Activated T-helper 1 cell treated with anti-CD3 and anti-CD28 coated beads, Interleukin-12 subunit alpha, Interleukin-12 subunit beta, Interleukin-2, Interleukin-4 antibody, amounts not matched to agents 30 ng/mL and 10 ng/mL and 1 ng/mL, durations not matched to agents 14 hours and 24 hours and 36 hours (primary cell): ENCODE measurements at regions of chr3 and their contacts with region 1.

Region 1: DNA sequence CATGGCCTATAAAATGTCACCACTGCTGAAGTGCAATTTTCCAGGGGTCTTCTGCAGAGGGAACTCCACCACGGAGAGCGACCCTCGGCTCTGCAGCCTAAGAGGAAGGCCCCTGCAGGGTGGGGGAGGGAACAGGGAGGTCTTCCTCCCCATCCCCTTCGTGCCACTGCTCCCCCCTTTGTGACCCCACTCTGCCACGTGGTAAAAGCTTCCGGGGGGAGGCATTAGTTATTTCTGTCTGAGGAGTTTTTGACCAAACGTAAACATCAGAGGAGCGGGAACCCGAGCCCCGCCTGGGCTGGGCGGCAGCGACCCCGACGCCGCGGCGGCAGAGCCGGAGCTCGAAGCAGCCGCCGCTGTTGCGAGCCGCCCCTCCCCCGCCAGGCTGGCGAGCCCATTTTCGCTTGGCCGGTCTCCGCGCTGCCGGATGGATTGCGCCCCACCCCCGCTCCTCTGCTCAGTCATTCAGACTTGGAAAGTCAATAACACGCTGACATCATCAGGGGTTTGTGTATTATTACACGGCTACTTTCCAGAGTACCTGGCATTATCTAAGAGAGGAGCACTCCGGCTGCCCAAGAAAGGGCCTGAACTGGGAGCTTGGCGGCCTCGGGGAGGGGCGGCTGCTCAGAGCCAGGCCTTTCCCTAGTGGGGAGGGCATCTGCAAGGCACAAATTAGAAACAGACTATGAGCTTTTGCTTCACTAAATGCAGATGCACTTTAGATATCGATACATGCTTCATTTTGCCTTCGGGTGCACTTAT is 162.5 kb upstream of the TBL1XR1 start:
- DNase-seq: peak; percentile 93
- H3K4me3 Mint-ChIP-seq: peak overlapping the region; percentile 80
- H3K27ac Mint-ChIP-seq: peak overlapping the region; percentile 97
- H3K4me1 Mint-ChIP-seq: peaks cover 48% of the 10 kb centered on the region
- H3K27me3 Mint-ChIP-seq: no peaks in the 10 kb centered on the region

Region 2: DNA sequence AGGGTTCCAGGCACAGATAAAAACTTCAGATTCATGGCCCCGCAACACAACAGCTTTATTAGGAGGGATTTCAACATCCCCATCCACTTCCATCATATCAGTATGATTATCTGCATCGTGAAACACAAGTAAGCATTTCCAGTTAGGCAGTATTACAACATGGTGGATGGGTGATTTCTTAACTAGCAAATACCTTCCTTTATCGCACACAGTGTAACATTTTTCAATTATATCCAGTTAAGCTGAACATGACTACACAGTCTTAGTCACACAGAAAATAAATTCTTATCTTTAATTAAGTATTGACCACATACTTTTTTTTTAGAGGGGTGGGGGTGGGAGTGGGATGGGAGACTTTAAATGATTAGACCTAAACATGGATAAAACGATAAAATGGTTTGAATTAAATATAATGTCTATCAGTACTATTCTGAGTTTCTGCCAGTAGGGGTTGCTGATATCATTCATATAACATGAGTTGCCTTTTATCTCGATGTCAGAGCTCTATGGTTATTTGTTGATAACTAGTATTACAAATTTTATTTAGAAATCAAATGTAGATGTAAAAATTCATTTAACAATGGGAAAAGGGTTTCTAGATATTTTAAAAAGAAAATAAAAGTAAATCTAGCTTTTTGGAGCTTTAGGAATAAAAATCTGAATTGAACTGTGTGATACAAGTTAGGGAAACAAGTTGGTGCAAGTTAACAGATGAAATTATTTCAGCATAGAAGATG is 309.1 kb before region 1 on chr3:
- intact Hi-C with region 1: loop called (anchors 2 kb)
- DNase-seq: no peak
- H3K4me3 Mint-ChIP-seq: no peak overlapping the region
- H3K27ac Mint-ChIP-seq: no peak overlapping the region
- H3K4me1 Mint-ChIP-seq: peaks cover 11% of the 10 kb centered on the region
- H3K27me3 Mint-ChIP-seq: no peaks in the 10 kb centered on the region

Region 3: DNA sequence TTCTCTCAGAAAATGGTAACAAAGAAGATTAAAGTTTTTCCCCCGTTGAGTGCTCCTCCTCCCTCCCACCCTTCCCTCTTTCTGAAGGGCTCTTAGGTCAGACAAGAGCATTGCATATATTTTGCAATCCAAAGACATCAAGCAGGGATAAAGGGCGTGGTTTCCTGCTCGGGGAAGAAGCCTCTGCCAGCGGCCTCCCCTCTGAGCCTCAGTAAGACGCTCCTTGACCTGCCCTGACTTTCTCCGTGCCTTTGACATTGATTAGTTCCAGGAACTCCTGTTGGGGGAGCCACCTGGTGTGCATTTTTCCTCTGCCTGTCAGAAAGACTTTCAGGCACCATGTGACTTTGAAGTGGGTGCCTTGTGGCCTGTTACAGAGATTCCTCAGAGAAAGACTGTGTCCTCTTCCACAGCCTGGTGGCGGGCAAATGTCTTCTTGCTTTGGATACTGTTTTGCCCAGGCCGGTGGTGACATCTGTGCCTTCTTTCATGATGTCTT is 75.3 kb before region 1 on chr3:
- intact Hi-C with region 1: loop called (anchors 2 kb)
- DNase-seq: peak; percentile 1
- H3K4me3 Mint-ChIP-seq: peak overlapping the region; percentile 49
- H3K27ac Mint-ChIP-seq: no peak overlapping the region
- H3K4me1 Mint-ChIP-seq: peaks cover 34% of the 10 kb centered on the region
- H3K27me3 Mint-ChIP-seq: no peaks in the 10 kb centered on the region

Region 4: GRCh38 chr3:177345049-177345972 is 14.5 kb before region 1 on chr3:
- intact Hi-C with region 1: loop called (anchors 1 kb)
- DNase-seq: peak; percentile 68
- H3K4me3 Mint-ChIP-seq: peak overlapping the region; percentile 17
- H3K27ac Mint-ChIP-seq: peak overlapping the region; percentile 95
- H3K4me1 Mint-ChIP-seq: peaks cover 46% of the 10 kb centered on the region
- H3K27me3 Mint-ChIP-seq: no peaks in the 10 kb centered on the region

Region 5: GRCh38 chr3:177589911-177590381 is 230.2 kb after region 1 on chr3:
- intact Hi-C with region 1: loop called (anchors 2 kb)
- DNase-seq: no peak
- H3K4me3 Mint-ChIP-seq: no peak overlapping the region
- H3K27ac Mint-ChIP-seq: no peak overlapping the region
- H3K4me1 Mint-ChIP-seq: peaks cover 34% of the 10 kb centered on the region
- H3K27me3 Mint-ChIP-seq: no peaks in the 10 kb centered on the region

Region 6: GRCh38 chr3:177705976-177706823 is 346.4 kb after region 1 on chr3:
- intact Hi-C with region 1: no loop called
- DNase-seq: no peak
- H3K4me3 Mint-ChIP-seq: no peak overlapping the region
- H3K27ac Mint-ChIP-seq: no peak overlapping the region
- H3K4me1 Mint-ChIP-seq: no peaks in the 10 kb centered on the region
- H3K27me3 Mint-ChIP-seq: no peaks in the 10 kb centered on the region

Region 7: GRCh38 chr3:177994976-177995375 is 635.2 kb after region 1 on chr3:
- intact Hi-C with region 1: loop called (anchors 2 kb)
- DNase-seq: no peak
- H3K4me3 Mint-ChIP-seq: no peak overlapping the region
- H3K27ac Mint-ChIP-seq: peak overlapping the region; percentile 75
- H3K4me1 Mint-ChIP-seq: peaks cover 21% of the 10 kb centered on the region
- H3K27me3 Mint-ChIP-seq: no peaks in the 10 kb centered on the region